CD4-positive, alpha-beta memory T cell (primary cell): ENCODE measurements at regions of chr14 and their contacts with region 1.

Region 1: GRCh38 chr14:91858215-91858905 is 9.0 kb downstream of the TC2N start:
- DNase-seq: peak in 1 of 5 donors; percentile 65
- H3K4me3 ChIP-seq: no peak overlapping the region
- H3K4me3 Mint-ChIP-seq: peak overlapping the region; percentile 7 to 87 (median 54)
- H3K27ac ChIP-seq: no peak overlapping the region
- H3K27ac Mint-ChIP-seq: peak overlapping the region; percentile 77 to 95 (median 89)
- H3K4me1 ChIP-seq: peaks cover 96% of the 10 kb centered on the region
- H3K4me1 Mint-ChIP-seq: peaks cover 68 to 100% (median 91%) of the 10 kb centered on the region in 4 donors
- H3K27me3 ChIP-seq: no peaks in the 10 kb centered on the region
- H3K27me3 Mint-ChIP-seq: no peaks in the 10 kb centered on the region

Region 2: GRCh38 chr14:91830777-91831176 is 27.6 kb before region 1 on chr14:
- CTCF ChIA-PET with region 1: interaction called, 3 read pairs
- POLR2A ChIA-PET with region 1: interaction called, 51 read pairs
- intact Hi-C with region 1: no loop called
- DNase-seq: peak in 1 of 5 donors; percentile 33
- H3K4me3 ChIP-seq: no peak overlapping the region
- H3K4me3 Mint-ChIP-seq: peak overlapping the region in 4 of 8 donors; percentile 18 to 72 (median 46)
- H3K27ac ChIP-seq: no peak overlapping the region
- H3K27ac Mint-ChIP-seq: peak overlapping the region in 3 of 7 donors; percentile 48 to 89 (median 69)
- H3K4me1 ChIP-seq: peaks cover 67% of the 10 kb centered on the region
- H3K4me1 Mint-ChIP-seq: peaks cover 58 to 76% (median 69%) of the 10 kb centered on the region in 4 donors
- H3K27me3 ChIP-seq: no peaks in the 10 kb centered on the region
- H3K27me3 Mint-ChIP-seq: no peaks in the 10 kb centered on the region

Region 3: GRCh38 chr14:91836119-91836881 is 22.1 kb before region 1 on chr14:
- CTCF ChIA-PET with region 1: interaction called, 3 read pairs
- POLR2A ChIA-PET with region 1: interaction called, 51 read pairs
- intact Hi-C with region 1: no loop called
- DNase-seq: peak; percentile 80 to 90 (median 83)
- H3K4me3 ChIP-seq: peak overlapping the region; percentile 34 to 63
- H3K4me3 Mint-ChIP-seq: peak overlapping the region; percentile 84 to 92 (median 88)
- H3K27ac ChIP-seq: peak overlapping the region; percentile 68
- H3K27ac Mint-ChIP-seq: peak overlapping the region; percentile 81 to 95 (median 91)
- H3K4me1 ChIP-seq: peaks cover 72% of the 10 kb centered on the region
- H3K4me1 Mint-ChIP-seq: peaks cover 64 to 94% (median 77%) of the 10 kb centered on the region in 4 donors
- H3K27me3 ChIP-seq: no peaks in the 10 kb centered on the region
- H3K27me3 Mint-ChIP-seq: no peaks in the 10 kb centered on the region

Region 4: GRCh38 chr14:91843437-91843836 is 14.9 kb before region 1 on chr14:
- CTCF ChIA-PET with region 1: interaction called, 6 read pairs
- POLR2A ChIA-PET with region 1: interaction called, 51 read pairs
- intact Hi-C with region 1: no loop called
- DNase-seq: no peak
- H3K4me3 ChIP-seq: no peak overlapping the region
- H3K4me3 Mint-ChIP-seq: no peak overlapping the region
- H3K27ac ChIP-seq: no peak overlapping the region
- H3K27ac Mint-ChIP-seq: peak overlapping the region in 3 of 7 donors; percentile 29 to 40 (median 32)
- H3K4me1 ChIP-seq: peaks cover 57% of the 10 kb centered on the region
- H3K4me1 Mint-ChIP-seq: peaks cover 53 to 87% (median 75%) of the 10 kb centered on the region in 4 donors
- H3K27me3 ChIP-seq: no peaks in the 10 kb centered on the region
- H3K27me3 Mint-ChIP-seq: no peaks in the 10 kb centered on the region

Region 5: DNA sequence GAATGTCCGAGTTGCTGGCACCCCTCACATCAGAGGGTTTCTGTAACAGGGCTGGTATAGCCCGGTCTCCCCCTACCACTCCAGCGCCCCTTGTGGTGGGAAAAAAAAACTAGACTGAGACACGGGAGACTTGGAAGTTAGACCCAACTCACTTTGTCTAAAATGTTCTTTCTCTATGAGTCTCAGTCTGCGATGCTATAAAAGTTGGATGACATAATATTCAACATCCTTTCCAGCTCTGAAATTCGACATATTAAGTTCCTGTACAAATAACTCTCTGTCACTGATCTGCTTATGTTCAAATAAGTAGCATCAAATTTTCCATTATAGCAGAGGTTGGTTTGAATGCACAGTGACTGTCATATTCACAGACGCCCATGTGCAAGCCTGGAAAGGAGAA is 34.6 kb after region 1 on chr14:
- CTCF ChIA-PET with region 1: interaction called, 6 read pairs
- POLR2A ChIA-PET with region 1: interaction called, 10 read pairs
- intact Hi-C with region 1: no loop called
- DNase-seq: peak in 4 of 5 donors; percentile 30 to 48 (median 41)
- H3K4me3 ChIP-seq: no peak overlapping the region
- H3K4me3 Mint-ChIP-seq: peak overlapping the region in 2 of 8 donors; percentile 43 to 53
- H3K27ac ChIP-seq: no peak overlapping the region
- H3K27ac Mint-ChIP-seq: peak overlapping the region in 3 of 7 donors; percentile 9 to 38 (median 36)
- H3K4me1 ChIP-seq: peaks cover 54% of the 10 kb centered on the region
- H3K4me1 Mint-ChIP-seq: peaks cover 29 to 71% (median 48%) of the 10 kb centered on the region in 4 donors
- H3K27me3 ChIP-seq: no peaks in the 10 kb centered on the region
- H3K27me3 Mint-ChIP-seq: no peaks in the 10 kb centered on the region

Region 6: DNA sequence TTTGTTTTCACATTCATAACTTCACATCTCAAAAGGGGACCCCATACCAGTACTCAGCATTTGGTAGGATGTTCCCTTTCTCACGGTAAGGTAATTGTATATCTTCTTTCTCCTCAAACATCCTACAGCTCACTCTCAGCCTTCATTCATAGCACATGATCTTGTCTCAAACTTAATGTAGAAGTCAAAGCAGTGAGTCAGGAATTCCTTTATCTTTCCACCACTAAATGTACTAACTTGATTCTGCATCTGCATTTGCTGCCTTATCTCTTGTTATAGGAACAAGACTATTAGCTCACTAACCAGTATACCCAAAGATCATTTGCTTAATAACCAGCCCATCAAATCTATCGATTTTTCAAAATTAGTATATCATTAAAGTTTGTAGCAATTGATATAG is 286.3 kb after region 1 on chr14:
- CTCF ChIA-PET with region 1: no interaction called
- POLR2A ChIA-PET with region 1: no interaction called
- intact Hi-C with region 1: no loop called
- DNase-seq: no peak
- H3K4me3 ChIP-seq: no peak overlapping the region
- H3K4me3 Mint-ChIP-seq: no peak overlapping the region
- H3K27ac ChIP-seq: no peak overlapping the region
- H3K27ac Mint-ChIP-seq: peak overlapping the region in 1 of 7 donors; percentile 4
- H3K4me1 ChIP-seq: no peaks in the 10 kb centered on the region
- H3K4me1 Mint-ChIP-seq: peaks cover 12 to 15% (median 14%) of the 10 kb centered on the region in 4 donors
- H3K27me3 ChIP-seq: no peaks in the 10 kb centered on the region
- H3K27me3 Mint-ChIP-seq: no peaks in the 10 kb centered on the region